ENCODE measurements at regions of chr10 and their contacts with region 1.

Region 1: GRCh38 chr10:86971232-86971991 is 3.1 kb downstream of the ADIRF start:
- DNase-seq: no peak
- H3K4me3 ChIP-seq: peak overlapping the region; percentile 74
- H3K27me3 ChIP-seq: no peaks in the 10 kb centered on the region
- CTCF ChIP-seq: peak; percentile 27; the same call in 1 of the 2 replicates

Region 2: GRCh38 chr10:86688398-86688921 is 283.0 kb before region 1 on chr10:
- CTCF ChIA-PET with region 1: interaction called, 12 read pairs
- POLR2A ChIA-PET with region 1: no interaction called
- DNase-seq: no peak
- H3K4me3 ChIP-seq: no peak overlapping the region
- H3K27me3 ChIP-seq: no peaks in the 10 kb centered on the region
- CTCF ChIP-seq: peak; percentile 87

Region 3: DNA sequence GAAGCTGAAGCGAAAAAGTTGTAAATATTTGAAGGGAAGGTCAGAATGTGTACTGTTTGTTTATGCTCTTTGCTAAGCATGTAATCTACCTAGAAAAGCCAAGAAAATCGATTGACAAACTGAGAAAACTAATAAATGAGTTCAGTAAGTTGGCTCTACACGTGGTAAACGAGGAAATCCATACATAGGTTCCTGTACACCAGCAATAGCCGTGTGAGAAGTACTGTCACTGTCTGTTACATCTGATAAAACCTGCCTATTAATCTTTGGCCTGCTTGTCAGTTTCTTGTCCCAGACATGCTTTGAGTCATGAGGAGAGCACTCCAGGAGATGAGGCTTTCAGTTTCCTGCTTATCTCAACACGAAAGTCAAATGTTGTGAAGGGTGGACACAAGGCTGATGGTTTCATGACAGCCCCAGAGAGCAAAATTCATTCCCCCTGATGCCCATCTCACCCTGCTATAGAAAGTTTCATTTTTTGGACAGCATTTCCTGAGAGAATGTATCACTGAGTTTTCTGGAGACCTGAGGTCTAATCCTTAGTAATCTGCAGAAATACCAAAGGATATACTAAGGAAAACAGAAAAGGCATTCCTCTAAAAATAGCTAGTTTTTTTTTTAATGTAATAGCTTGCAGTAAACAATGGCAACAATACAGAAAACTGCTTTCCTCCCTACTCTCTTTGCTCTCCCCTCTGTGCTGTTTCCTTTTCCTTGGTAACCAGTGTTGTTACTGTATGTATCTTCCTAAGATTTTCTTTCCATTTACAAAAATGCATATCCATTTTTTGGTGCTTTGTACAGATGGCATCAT is 196.1 kb before region 1 on chr10:
- CTCF ChIA-PET with region 1: no interaction called
- POLR2A ChIA-PET with region 1: no interaction called
- DNase-seq: no peak
- H3K4me3 ChIP-seq: no peak overlapping the region
- H3K27me3 ChIP-seq: no peaks in the 10 kb centered on the region
- CTCF ChIP-seq: no peak

Region 4: GRCh38 chr10:86945361-86946212 is 25.8 kb before region 1 on chr10:
- CTCF ChIA-PET with region 1: interaction called, 346 read pairs
- POLR2A ChIA-PET with region 1: no interaction called
- DNase-seq: no peak
- H3K4me3 ChIP-seq: no peak overlapping the region
- H3K27me3 ChIP-seq: no peaks in the 10 kb centered on the region
- CTCF ChIP-seq: peak; percentile 58

Region 5: GRCh38 chr10:86953747-86954680 is 17.4 kb before region 1 on chr10:
- CTCF ChIA-PET with region 1: interaction called, 23 read pairs
- POLR2A ChIA-PET with region 1: interaction called, 4 read pairs
- DNase-seq: no peak
- H3K4me3 ChIP-seq: no peak overlapping the region
- H3K27me3 ChIP-seq: no peaks in the 10 kb centered on the region
- CTCF ChIP-seq: no peak

Region 6: DNA sequence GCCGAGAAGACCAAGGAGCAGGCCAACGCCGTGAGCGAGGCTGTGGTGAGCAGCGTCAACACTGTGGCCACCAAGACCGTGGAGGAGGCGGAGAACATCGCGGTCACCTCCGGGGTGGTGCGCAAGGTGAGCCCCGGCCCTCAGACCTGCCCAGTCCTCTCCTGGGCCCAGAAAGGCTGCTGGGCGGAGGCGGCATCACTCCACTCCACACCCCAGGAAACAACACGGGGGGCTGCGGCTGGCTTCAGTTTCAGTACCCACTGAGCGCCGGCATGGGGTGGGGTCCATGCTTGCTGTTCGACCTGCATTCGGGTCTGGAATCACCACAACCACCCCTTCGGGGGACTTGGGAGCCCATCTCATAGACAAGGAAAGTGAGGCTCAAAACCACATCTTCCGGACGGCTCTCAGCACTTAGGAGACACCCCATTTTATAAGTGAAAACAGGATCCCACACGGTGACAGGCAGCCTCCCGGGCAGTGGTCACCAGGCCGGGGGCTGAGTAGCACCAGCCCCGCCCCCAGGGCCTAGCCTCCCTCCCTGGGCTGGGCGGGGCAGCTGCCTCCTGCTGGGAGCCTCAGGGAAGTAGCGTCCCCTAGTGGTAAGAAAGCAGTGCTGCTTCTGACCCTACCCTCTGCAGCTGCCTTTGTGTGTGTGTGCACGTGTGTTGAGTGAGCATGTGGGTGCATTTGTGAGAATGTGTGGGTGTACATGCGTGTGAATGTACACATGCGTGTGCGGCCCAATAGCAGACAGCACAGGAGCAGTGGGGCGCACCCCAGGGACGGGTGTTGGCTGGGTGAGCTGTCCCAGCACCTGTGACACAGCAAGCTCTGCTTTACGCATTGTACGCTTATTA is 11.2 kb before region 1 on chr10:
- CTCF ChIA-PET with region 1: interaction called, 23 read pairs
- POLR2A ChIA-PET with region 1: interaction called, 4 read pairs
- DNase-seq: no peak
- H3K4me3 ChIP-seq: no peak overlapping the region
- H3K27me3 ChIP-seq: no peaks in the 10 kb centered on the region
- CTCF ChIP-seq: peak; percentile 96

Measured in BJ (cell line).